ENCODE measurements at regions of chr1 and their contacts with region 1.

Region 1: GRCh38 chr1:37989361-37989930 is 376 bp downstream of the SF3A3 start:
- DNase-seq: peak; percentile 67
- ATAC-seq: peak; percentile 31
- H3K4me3 Mint-ChIP-seq: peak overlapping the region; percentile 93
- H3K27ac Mint-ChIP-seq: peak overlapping the region; percentile 90
- H3K4me1 Mint-ChIP-seq: peaks cover 20% of the 10 kb centered on the region
- H3K27me3 Mint-ChIP-seq: no peaks in the 10 kb centered on the region

Region 2: DNA sequence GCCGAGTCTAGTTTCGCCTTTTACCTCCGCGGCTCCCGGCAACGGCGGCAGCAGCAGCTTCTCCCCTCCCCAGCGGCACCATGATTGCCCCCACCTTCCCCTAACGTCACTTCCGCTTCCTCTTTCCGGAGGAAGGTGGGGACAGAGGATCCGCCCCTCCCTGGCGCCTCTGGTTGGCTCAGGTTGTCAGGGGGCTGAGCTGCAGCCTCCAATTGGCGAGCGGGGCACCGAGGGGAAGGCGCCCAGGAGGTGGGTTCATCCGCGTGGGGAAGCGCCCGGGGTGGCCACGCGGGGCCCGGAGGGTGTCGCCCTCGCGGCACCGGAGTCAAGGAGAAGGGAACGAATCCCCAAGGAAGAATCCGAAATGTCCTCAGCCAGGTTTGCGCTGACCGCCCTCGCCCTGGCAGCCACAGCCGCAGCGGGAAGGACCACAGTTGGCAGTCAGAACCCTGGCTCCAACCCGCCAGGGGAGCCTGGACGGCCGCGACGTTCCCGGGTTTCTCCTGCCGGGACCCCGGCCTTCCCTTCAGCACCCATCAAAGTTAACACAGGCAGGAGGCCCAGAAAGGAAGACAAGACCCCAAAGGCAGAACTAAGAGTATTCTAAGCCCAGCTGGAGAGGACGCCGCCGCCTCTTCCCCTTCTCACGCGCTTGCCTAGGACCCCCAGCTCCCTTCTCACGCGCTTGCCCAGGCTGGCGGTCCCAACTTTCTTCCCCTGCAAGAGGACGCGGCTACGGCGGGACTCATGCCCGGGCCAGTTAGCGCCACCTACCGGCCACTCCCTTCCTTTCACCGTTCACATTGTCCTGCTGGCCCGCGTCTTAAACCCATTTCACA is 129.7 kb before region 1 on chr1 and contains the start of gene MTF1:
- CTCF ChIA-PET with region 1: interaction called, 8 read pairs
- POLR2A ChIA-PET with region 1: no interaction called
- intact Hi-C with region 1: loop called in 1 of 2 experiments (anchors 1 kb)
- DNase-seq: peak; percentile 98
- ATAC-seq: peak; percentile 98
- H3K4me3 Mint-ChIP-seq: peak within 1 kb of the TSS; percentile 87
- H3K27ac Mint-ChIP-seq: peak within 1 kb of the TSS; percentile 93
- H3K4me1 Mint-ChIP-seq: peaks cover 40% of the 10 kb centered on the region
- H3K27me3 Mint-ChIP-seq: no peaks in the 10 kb centered on the region
- total RNA-seq, gene MTF1: 16.1 to 23.8 TPM

Region 3: DNA sequence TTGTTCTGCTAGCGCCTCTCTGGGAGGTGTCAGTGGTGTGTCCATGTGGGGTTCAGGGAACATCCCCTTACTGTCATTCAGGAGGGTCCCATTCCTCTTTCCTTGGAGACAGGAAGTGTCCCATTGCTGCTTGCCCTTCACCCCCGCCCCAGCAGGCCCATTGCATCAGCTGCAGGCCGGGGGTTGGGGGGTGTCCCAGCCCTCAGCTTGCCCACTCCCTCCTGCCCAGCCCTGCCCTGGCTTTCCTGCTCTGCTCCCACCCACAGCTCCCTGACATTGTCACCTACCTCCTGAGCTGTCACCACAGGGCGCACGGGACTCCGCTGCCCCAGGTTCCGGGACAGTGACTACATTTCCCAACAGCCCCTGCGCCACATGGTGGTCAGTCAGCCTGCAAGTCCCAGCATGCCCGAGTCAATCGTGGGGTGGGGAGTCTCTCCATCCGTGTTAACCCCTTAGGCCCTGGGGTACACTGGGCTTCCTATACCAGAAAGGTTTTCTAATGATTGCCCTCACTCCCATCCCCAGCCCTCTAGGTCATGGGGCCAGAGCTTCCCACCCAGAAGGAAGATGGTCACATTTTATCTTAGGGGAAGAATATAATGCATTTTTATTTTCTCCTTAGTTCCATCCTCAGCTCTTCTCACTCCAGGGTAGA is 42.6 kb before region 1 on chr1 and contains the start of gene INPP5B:
- CTCF ChIA-PET with region 1: interaction called, 6 read pairs
- POLR2A ChIA-PET with region 1: no interaction called
- intact Hi-C with region 1: loop called in 1 of 2 experiments (anchors 1 kb)
- DNase-seq: peak; percentile 89
- ATAC-seq: peak; percentile 97
- H3K4me3 Mint-ChIP-seq: peak within 1 kb of the TSS; percentile 87
- H3K27ac Mint-ChIP-seq: peak within 1 kb of the TSS; percentile 98
- H3K4me1 Mint-ChIP-seq: peaks cover 17% of the 10 kb centered on the region
- H3K27me3 Mint-ChIP-seq: no peaks in the 10 kb centered on the region
- total RNA-seq, gene INPP5B: 27.7 to 28.9 TPM

Region 4: DNA sequence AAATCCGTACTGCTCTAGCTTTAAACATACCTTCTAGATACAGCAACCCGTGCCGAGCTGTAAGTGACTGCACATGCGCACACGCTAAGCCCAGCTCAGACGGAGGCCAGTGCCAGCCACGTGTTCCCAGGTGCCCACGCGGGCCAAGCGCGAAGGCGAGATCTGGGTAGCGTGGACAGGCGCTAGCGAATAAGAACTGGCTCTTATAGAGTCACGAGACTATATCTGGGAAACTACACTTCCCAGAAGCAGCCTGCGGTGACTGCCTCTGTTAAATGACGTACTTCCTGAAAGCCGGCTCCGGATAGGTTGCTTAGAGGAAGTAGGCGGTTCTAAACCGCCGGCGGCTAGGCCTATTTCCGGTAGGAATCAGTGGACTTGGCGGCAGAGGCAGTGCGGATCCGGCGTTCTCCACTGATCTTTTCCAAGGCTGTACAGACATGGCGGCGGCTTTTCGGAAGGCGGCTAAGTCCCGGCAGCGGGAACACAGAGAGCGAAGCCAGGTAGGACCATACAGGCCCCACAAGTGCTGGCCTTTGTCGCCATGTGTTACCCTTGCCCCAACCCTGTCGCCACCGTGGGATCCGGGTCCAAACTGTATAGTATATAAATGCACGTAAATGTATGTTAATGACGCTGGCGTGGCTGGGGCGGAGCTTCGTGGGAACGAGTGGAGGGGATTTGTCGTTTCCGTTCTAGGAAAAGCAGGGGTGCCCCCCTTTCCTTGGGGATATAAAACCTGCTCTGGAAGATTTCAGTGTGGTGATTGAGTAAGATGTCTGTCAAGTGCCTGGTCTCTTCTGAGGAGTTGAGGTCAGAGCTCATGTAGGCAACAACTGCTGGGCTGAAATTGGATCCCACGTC is 23.1 kb after region 1 on chr1 and contains the start of gene UTP11:
- CTCF ChIA-PET with region 1: interaction called, 30 read pairs
- POLR2A ChIA-PET with region 1: no interaction called
- intact Hi-C with region 1: loop called (anchors 1 kb)
- DNase-seq: peak; percentile 94
- ATAC-seq: peak; percentile 81
- H3K4me3 Mint-ChIP-seq: peak within 1 kb of the TSS; percentile 97
- H3K27ac Mint-ChIP-seq: peak within 1 kb of the TSS; percentile 95
- H3K4me1 Mint-ChIP-seq: peaks cover 51% of the 10 kb centered on the region
- H3K27me3 Mint-ChIP-seq: no peaks in the 10 kb centered on the region
- total RNA-seq, gene UTP11: 68.9 to 82.4 TPM

Measured in activated CD4-positive, alpha-beta T cell treated with anti-CD3 and anti-CD28 coated beads for 36 hours (primary cell).